Tibial artery (tissue), 4 donors: ENCODE measurements at regions of chr5 and their contacts with region 1.

Region 1: DNA sequence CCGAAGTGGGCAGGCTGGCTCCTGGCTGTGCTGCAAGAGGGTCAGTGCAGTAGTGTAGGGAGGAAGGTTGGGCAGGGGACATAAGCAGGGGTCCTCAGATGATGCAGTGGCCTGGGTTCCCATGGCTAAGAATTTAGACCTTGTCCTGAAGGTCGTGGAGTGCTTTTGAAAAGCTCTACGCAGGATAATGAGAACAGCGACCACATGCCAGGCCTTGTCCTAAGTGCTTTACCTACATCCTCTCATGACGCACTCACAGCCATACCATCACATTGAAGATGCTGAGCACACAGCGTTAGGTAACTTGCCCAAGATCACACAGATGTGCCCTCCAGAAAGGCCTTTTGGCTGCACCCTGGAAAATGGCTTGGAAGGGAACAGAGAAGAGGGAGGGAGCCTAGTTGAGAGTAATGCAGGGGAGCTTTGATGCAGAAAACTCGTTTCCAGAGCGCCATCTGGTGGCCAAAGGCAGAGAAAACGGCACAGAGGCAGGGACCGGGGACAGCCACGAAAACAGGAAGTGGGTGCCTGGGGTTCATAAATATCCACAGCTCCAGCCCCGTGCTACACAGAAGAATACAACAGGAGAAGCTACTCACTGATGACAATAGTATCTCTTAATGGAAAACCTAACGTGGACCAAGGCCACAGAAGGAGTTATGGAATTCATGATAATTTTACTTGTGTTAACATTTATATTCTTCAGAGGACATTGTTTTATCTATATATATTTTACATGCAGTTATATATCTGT is 2.6 kb upstream of the PCDH12 start:
- DNase-seq: peak; percentile 85 to 92
- H3K4me3 ChIP-seq: no peak overlapping the region
- H3K27ac ChIP-seq: no peak overlapping the region
- H3K4me1 ChIP-seq: no peaks in the 10 kb centered on the region
- H3K27me3 ChIP-seq: no peaks in the 10 kb centered on the region
- CTCF ChIP-seq: peak; percentile 79 to 90

Region 2: DNA sequence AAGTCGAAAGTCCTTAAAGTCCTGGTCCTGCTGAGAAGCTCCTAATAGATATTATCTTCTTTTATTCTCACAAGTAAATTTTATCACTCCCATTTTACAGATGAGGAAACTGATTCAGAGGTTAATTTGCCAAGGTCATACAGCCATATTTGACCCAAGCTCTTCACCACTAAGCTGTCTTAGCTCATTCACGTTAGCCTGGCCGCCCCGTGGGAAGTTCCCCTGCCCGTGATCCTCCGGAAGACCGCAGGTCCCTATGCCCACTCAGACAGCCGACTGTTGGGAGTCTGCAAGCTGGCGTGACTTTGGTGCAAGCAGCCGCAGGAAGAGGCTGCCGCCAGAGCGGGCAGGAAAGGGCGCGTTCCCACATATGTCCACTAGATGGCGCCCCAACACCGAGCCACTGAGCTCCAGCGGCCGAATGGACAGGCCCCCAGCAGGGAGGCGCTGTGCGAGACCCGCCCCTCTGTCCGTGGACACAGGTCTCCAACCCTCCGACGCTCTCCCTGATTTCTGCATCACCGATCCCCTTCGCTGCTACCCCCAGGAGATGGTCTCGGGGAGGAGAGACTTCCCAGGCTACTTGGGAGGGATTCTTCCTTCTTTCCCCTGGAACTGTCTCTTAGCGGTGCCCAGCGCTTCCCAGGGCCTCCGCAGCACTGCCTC is 268.6 kb before region 1 on chr5:
- intact Hi-C with region 1: loop called (anchors 2 kb)
- DNase-seq: peak; percentile 79 to 88
- H3K4me3 ChIP-seq: peak overlapping the region; percentile 2 to 34
- H3K27ac ChIP-seq: no peak overlapping the region
- H3K4me1 ChIP-seq: peaks cover 0 to 9% (median 7%) of the 10 kb centered on the region in 4 donors
- H3K27me3 ChIP-seq: peaks cover 0 to 50% of the 10 kb centered on the region in 2 donors
- CTCF ChIP-seq: peak; percentile 98 to 99